IMR-90 (cell line): ENCODE measurements at regions of chr4 and their contacts with region 1.

Region 1: DNA sequence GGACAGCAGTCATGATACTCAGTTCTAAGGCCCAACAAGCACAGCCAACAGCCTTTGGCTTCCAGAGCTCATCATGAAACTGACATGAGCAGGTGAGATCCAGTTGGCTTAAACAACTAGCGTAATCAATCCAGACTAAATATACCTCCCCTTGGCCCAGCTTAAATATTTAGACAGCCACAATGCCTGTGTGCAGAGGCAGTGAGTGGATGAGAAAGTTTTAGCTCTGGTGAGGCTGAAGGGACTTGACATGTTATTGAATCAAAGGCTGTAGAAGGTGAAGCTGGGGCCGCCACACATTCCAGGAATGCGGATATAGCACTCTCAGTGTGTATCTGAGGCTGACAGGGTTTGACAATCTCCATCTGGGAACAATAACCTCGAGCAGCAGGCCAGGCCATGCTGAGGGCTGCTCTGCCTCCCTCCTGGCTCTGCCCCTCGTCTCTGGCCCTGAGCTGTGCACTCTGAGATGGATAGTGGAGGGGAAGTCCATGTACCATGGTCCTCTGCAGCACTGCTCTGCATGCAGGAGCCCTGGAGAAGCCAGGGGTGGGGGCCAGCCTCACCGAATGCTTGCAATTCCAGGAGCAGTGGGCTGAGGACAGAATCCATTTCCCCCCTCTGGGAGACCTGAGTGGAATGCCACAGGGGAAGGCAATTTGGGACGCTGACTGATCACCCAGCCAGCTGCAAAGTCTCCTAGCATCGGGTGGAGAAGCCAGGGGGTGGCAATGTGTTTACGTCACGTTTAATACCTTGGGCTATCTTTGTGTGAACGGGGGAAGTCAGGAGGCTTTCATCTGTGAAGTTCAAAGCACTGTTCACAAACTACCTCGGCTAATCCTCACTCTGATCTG is 37.3 kb upstream of the RASL11B start:
- DNase-seq: peak; percentile 85
- ATAC-seq: peak; percentile 75
- H3K4me3 ChIP-seq: no peak overlapping the region
- H3K27ac ChIP-seq: peak overlapping the region; percentile 62
- H3K4me1 ChIP-seq: peaks cover 26% of the 10 kb centered on the region
- H3K27me3 ChIP-seq: no peaks in the 10 kb centered on the region
- CTCF ChIP-seq: no peak
- POLR2A ChIP-seq: no peak
- RAD21 ChIP-seq: no peak

Region 2: DNA sequence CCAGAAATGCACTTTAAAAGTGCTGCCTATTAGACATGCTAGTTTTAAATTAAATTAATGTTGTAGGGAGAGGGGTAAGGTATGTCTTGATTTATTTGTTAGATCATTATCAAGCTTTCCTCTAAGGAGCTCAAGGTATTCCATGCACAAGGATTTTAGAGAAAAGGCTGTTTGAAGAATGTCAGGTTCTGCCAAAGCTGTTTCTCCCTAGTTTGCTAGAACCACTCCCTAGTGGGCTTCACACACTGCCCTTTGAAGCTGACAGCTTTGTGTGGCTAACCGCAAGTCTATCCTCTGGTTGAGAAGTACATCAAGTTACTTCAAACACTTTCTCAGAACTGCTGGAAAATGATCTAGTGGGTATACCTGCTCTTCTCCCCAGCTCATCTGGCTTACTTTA is 69.6 kb after region 1 on chr4:
- CTCF ChIA-PET with region 1: no interaction called
- POLR2A ChIA-PET with region 1: no interaction called
- dilution Hi-C with region 1: no loop called
- in situ Hi-C with region 1: no loop called
- intact Hi-C with region 1: loop called (anchors 2 kb)
- DNase-seq: no peak
- ATAC-seq: no peak
- H3K4me3 ChIP-seq: no peak overlapping the region
- H3K27ac ChIP-seq: peak overlapping the region; percentile 41; the same call in 1 of the 2 replicates
- H3K4me1 ChIP-seq: peaks cover 21% of the 10 kb centered on the region
- H3K27me3 ChIP-seq: no peaks in the 10 kb centered on the region
- CTCF ChIP-seq: no peak
- POLR2A ChIP-seq: no peak
- RAD21 ChIP-seq: no peak